ENCODE measurements at regions of chr12 and their contacts with region 1.

Region 1: DNA sequence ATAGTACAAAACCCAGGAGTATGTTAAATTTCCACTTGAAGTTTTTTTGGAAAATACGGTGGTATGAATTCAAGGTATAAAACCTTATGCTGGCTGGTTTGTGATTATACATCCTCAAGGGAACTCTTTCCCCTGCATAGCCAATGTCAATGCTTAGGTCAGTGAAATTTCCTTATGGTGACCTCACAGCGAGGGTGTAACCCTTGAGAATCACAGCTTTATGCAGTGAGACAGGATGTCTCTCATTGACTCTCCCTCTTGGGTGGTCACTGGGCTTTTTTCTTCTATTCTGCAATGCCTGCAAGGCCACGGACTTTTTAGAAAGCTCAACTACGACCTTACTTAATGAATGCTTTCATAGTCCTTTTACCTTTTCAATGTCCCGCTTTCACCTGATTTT is 64.4 kb downstream of the TMTC1 start:
- DNase-seq: no peak
- ATAC-seq: peak; percentile 36; the same call in 2 of the 3 replicates
- H3K4me3 ChIP-seq: no peak overlapping the region
- H3K27ac ChIP-seq: no peak overlapping the region
- H3K4me1 ChIP-seq: no peaks in the 10 kb centered on the region
- H3K27me3 ChIP-seq: no peaks in the 10 kb centered on the region
- CTCF ChIP-seq: no peak
- EP300 ChIP-seq: no peak
- POLR2A ChIP-seq: no peak
- RAD21 ChIP-seq: no peak

Region 2: DNA sequence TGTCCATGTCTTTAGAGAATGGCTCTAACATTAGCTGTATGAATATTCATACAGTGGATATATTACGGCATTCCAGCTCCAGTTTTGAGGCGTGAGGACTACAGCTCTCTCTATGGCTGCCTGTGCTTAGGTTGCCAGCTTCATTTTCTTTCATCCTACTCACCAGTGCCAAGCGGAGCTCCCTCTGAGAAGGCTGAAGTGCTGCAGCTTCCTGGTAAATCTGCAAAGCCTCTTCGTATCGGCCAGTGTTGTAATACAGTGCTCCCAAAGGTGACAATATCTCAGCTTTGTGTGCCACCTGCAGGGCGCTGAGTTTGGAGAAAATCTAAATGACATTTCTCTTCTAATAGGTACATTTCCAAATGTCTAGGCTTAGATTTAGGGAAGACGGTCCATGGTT is 202.1 kb before region 1 on chr12:
- CTCF ChIA-PET with region 1: no interaction called
- POLR2A ChIA-PET with region 1: no interaction called
- RAD21 ChIA-PET with region 1: no interaction called
- SMC1A ChIA-PET with region 1: no interaction called
- in situ Hi-C with region 1: no loop called
- intact Hi-C with region 1: no loop called
- DNase-seq: no peak
- ATAC-seq: no peak
- H3K4me3 ChIP-seq: no peak overlapping the region
- H3K27ac ChIP-seq: no peak overlapping the region
- H3K4me1 ChIP-seq: no peaks in the 10 kb centered on the region
- H3K27me3 ChIP-seq: no peaks in the 10 kb centered on the region
- CTCF ChIP-seq: no peak; a peak in 1 of 6 replicates
- EP300 ChIP-seq: no peak
- POLR2A ChIP-seq: no peak
- RAD21 ChIP-seq: no peak

Region 3: DNA sequence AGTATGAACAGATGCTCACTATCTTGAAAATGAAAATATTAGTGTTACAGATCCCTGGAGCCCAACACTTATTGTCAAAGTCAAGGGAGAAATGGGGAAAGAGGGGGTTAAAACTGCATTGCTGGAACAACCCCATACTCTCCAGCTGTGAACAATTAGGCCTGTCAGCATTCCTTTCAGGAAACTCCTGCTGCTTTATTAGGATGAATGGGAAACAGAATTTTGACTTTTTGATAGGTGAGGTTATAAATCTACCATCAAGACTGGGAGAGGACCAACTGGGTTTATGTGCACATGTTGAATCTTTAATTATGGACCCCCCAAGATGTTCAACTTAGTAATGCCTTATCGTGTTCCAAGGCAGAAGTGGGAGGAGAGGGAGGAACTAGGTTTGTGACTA is 20.6 kb before region 1 on chr12:
- CTCF ChIA-PET with region 1: interaction called, 3 read pairs
- POLR2A ChIA-PET with region 1: interaction called, 7 read pairs
- RAD21 ChIA-PET with region 1: interaction called, 7 read pairs
- SMC1A ChIA-PET with region 1: interaction called, 58 read pairs
- in situ Hi-C with region 1: no loop called
- intact Hi-C with region 1: no loop called
- DNase-seq: no peak
- ATAC-seq: no peak
- H3K4me3 ChIP-seq: no peak overlapping the region
- H3K27ac ChIP-seq: no peak overlapping the region
- H3K4me1 ChIP-seq: no peaks in the 10 kb centered on the region
- H3K27me3 ChIP-seq: no peaks in the 10 kb centered on the region
- CTCF ChIP-seq: no peak
- EP300 ChIP-seq: no peak
- POLR2A ChIP-seq: no peak
- RAD21 ChIP-seq: no peak